ENCODE measurements at regions of chr1 and their contacts with region 1.

Region 1: DNA sequence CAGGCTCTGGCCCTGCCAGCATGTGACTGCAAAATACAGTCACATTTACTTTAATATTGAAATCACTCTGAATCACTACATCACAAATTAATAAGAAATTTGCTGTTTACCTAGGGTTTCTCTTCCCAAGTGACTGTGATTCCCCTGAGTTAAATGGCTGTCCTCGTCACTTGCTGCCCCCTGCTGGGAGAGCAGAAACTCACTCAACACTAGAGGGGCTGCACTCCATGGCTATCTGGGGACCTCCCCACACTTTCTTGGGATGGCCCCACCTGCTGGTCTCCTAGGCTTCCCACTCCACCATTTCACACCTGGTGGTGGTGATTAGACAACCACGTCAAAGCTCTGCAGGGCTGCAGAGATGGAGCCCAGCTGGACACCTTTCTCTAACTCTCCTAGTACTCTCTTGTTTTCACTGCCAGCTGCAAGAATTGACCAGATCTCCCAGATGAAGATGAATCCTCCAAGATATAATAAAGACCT is 63.4 kb downstream of the CD2 start:
- DNase-seq: peak; percentile 84
- H3K4me3 Mint-ChIP-seq: peak overlapping the region; percentile 25
- H3K27ac Mint-ChIP-seq: peak overlapping the region; percentile 85
- H3K4me1 Mint-ChIP-seq: peaks cover 50% of the 10 kb centered on the region
- H3K27me3 Mint-ChIP-seq: no peaks in the 10 kb centered on the region

Region 2: GRCh38 chr1:116754198-116754977 is 63.2 kb before region 1 on chr1 and contains the start of gene CD2:
- CTCF ChIA-PET with region 1: interaction called, 11 read pairs
- DNase-seq: peak; percentile 74
- H3K4me3 Mint-ChIP-seq: peak within 1 kb of the TSS; percentile 99
- H3K27ac Mint-ChIP-seq: peak within 1 kb of the TSS; percentile 99
- H3K4me1 Mint-ChIP-seq: peaks cover 43% of the 10 kb centered on the region
- H3K27me3 Mint-ChIP-seq: no peaks in the 10 kb centered on the region

Region 3: GRCh38 chr1:116763787-116764465 is 53.7 kb before region 1 on chr1:
- CTCF ChIA-PET with region 1: interaction called, 162 read pairs
- DNase-seq: peak; percentile 64
- H3K4me3 Mint-ChIP-seq: peak overlapping the region; percentile 71
- H3K27ac Mint-ChIP-seq: peak overlapping the region; percentile 99
- H3K4me1 Mint-ChIP-seq: peaks cover 99% of the 10 kb centered on the region
- H3K27me3 Mint-ChIP-seq: no peaks in the 10 kb centered on the region

Region 4: DNA sequence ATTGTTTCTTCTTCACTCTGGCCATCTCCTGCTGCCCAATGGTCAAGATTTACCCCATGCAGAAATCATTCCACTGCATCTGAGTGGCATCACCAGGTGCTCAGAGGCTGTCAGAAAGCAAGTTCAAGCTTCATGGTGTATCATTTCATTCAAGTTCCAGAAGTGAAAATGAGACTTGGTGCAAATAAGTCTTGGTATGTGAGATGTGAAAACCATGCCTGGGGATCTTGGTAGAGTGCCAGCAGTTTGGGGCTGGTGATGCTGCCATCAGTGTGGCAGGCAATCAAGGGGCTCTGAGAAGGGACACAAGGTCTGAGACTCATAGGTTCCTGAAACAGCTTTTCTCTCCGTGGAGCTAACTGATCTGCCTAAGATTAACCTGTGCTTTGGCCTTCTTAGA is 11.4 kb before region 1 on chr1:
- CTCF ChIA-PET with region 1: interaction called, 12 read pairs
- DNase-seq: peak; percentile 55
- H3K4me3 Mint-ChIP-seq: peak overlapping the region; percentile 45
- H3K27ac Mint-ChIP-seq: peak overlapping the region; percentile 91
- H3K4me1 Mint-ChIP-seq: peaks cover 92% of the 10 kb centered on the region
- H3K27me3 Mint-ChIP-seq: no peaks in the 10 kb centered on the region

Region 5: DNA sequence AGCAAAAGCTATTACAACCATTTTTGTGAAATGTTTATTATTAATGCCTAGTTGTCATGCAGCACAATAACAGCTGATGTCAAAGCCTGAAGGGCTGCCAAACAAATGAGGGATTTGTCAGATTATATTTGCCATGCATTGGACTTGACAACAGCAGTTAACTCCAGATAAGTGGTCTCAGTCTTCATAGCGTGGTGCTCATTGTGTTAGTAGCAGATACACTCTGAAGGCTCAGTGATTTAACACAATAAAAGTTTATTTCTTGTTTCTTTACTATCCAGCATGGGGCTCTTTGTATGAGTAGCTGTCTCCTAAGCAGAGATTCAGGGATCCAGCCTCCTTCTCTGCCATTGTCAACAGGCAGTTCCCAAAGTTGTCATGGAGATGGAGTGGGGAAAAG is 16.1 kb after region 1 on chr1:
- CTCF ChIA-PET with region 1: no interaction called
- DNase-seq: no peak
- H3K4me3 Mint-ChIP-seq: no peak overlapping the region
- H3K27ac Mint-ChIP-seq: no peak overlapping the region
- H3K4me1 Mint-ChIP-seq: peaks cover 2% of the 10 kb centered on the region
- H3K27me3 Mint-ChIP-seq: peaks cover 6% of the 10 kb centered on the region

Region 6: DNA sequence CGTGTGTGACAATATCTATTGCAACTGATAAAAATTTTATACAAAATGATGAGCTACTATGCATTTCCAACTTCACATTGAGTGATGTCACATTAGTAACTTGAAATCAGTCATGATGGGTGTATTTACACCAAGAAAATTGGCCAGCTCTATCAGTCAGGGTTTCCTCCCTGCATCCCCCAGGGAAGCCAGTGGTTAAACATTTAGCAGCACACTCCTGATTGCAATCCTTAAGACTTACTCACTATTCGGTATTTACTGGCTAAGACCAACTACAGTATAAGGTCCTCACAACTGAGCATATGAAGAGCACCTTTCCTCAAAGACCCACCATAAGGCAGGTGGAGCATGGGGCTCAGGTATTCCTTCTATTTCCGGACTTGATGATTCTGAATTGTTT is 50.8 kb after region 1 on chr1:
- CTCF ChIA-PET with region 1: no interaction called
- DNase-seq: no peak
- H3K4me3 Mint-ChIP-seq: no peak overlapping the region
- H3K27ac Mint-ChIP-seq: no peak overlapping the region
- H3K4me1 Mint-ChIP-seq: no peaks in the 10 kb centered on the region
- H3K27me3 Mint-ChIP-seq: peaks cover 4% of the 10 kb centered on the region

Measured in activated naive CD4-positive, alpha-beta T cell treated with anti-CD3 and anti-CD28 coated beads, Interleukin-2, amount 10 ng/mL, durations not matched to agents 7 days and 5 days (primary cell).